Esophagus squamous epithelium (tissue), 5 donors: ENCODE measurements at regions of chr12 and their contacts with region 1.

Region 1: GRCh38 chr12:107131832-107132616 is 38.7 kb upstream of the CRY1 start:
- DNase-seq: no peak
- H3K4me3 ChIP-seq: no peak overlapping the region
- H3K27ac ChIP-seq: no peak overlapping the region
- H3K4me1 ChIP-seq: peaks cover 0 to 5% (median 0%) of the 10 kb centered on the region in 3 donors
- H3K27me3 ChIP-seq: no peaks in the 10 kb centered on the region
- CTCF ChIP-seq: peak; percentile 57 to 87 (median 73)
- POLR2A ChIP-seq: no peak

Region 2: GRCh38 chr12:107317751-107318613 is 186.0 kb after region 1 on chr12:
- intact Hi-C with region 1: loop called (anchors 10 kb)
- DNase-seq: peak; percentile 8
- H3K4me3 ChIP-seq: peak overlapping the region; percentile 53 to 73 (median 66)
- H3K27ac ChIP-seq: peak overlapping the region; percentile 79 to 87 (median 83)
- H3K4me1 ChIP-seq: peaks cover 13 to 58% (median 17%) of the 10 kb centered on the region in 3 donors
- H3K27me3 ChIP-seq: peaks cover 0 to 82% (median 0%) of the 10 kb centered on the region in 4 donors
- CTCF ChIP-seq: peak in 4 of 6 experiments; percentile 5 to 38 (median 20)
- POLR2A ChIP-seq: peak in 3 of 4 donors; percentile 49 to 81 (median 65)

Region 3: GRCh38 chr12:107402041-107403022 is 270.3 kb after region 1 on chr12:
- intact Hi-C with region 1: loop called (anchors 5 kb)
- DNase-seq: no peak
- H3K4me3 ChIP-seq: no peak overlapping the region
- H3K27ac ChIP-seq: no peak overlapping the region
- H3K4me1 ChIP-seq: peaks cover 8 to 44% (median 15%) of the 10 kb centered on the region in 3 donors
- H3K27me3 ChIP-seq: no peaks in the 10 kb centered on the region
- CTCF ChIP-seq: peak in 5 of 6 experiments; percentile 58 to 85 (median 65)
- POLR2A ChIP-seq: no peak